Left ventricle myocardium superior (tissue), 1 donor: ENCODE measurements at regions of chr7 and their contacts with region 1.

Region 1: GRCh38 chr7:142603870-142604448 is 145.3 kb upstream of the PRSS1 start:
- DNase-seq: no peak
- ATAC-seq: no peak

Region 2: GRCh38 chr7:142811154-142811737 is 207.3 kb after region 1 on chr7:
- intact Hi-C with region 1: loop called (anchors 10 kb)
- DNase-seq: no peak
- ATAC-seq: peak; percentile 41